Posterior vena cava (tissue), 2 donors: ENCODE measurements at regions of chr3 and their contacts with region 1.

Region 1: GRCh38 chr3:69803681-69804270 is 64.5 kb downstream of the MITF start:
- DNase-seq: no peak

Region 2: DNA sequence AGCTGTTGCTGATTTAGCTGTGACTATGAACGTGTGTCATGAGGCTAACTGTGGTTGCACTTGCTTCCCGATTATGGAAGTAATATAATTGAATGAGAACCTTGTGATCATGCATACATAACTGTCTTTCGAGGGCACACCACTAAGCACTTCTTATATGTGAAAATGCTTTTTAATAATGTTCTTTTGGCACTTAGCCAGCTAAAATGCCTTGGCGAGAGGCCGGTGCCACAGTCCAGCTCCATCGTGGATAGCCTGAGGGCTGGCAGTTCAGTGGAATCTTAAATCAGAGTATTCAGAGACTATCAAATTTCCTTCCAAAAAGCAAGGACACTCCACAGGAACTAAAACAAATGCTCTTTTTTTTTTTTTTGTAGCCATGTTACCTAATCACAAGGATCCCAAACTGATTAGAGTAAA is 256.3 kb before region 1 on chr3:
- intact Hi-C with region 1: no loop called
- DNase-seq: no peak

Region 3: DNA sequence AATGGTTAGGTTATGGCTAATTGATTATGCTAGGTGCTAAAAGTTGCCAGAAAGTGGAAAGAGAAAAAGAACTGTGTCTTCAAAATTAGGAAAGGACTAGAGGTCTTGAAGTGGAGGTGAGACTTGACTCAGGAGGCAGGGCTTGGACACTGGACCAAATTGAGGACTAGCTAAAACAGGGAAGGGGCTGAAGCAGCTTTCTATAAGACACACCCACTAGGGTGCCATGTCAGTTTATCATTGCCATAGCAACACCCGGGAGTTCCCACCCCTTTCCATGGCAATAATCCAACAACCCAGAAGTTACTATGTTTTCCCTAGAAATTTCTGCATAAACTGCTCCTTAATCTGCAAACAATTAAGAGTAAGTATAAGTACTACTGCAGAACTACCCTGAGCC is 107.4 kb before region 1 on chr3:
- intact Hi-C with region 1: loop called in 1 of 2 experiments (anchors 5 kb)
- DNase-seq: no peak